Activated CD4-positive, alpha-beta T cell treated with anti-CD3 and anti-CD28 coated beads, Interleukin-2, amount 10 ng/mL, durations not matched to agents 7 days and 5 days (primary cell): ENCODE measurements at regions of chr15 and their contacts with region 1.

Region 1: GRCh38 chr15:64651573-64652260 is 123.7 kb downstream of the RBPMS2 start:
- DNase-seq: peak; percentile 40
- H3K4me3 Mint-ChIP-seq: peak overlapping the region; percentile 4
- H3K27ac Mint-ChIP-seq: peak overlapping the region; percentile 86
- H3K4me1 Mint-ChIP-seq: peaks cover 39% of the 10 kb centered on the region
- H3K27me3 Mint-ChIP-seq: no peaks in the 10 kb centered on the region

Region 2: DNA sequence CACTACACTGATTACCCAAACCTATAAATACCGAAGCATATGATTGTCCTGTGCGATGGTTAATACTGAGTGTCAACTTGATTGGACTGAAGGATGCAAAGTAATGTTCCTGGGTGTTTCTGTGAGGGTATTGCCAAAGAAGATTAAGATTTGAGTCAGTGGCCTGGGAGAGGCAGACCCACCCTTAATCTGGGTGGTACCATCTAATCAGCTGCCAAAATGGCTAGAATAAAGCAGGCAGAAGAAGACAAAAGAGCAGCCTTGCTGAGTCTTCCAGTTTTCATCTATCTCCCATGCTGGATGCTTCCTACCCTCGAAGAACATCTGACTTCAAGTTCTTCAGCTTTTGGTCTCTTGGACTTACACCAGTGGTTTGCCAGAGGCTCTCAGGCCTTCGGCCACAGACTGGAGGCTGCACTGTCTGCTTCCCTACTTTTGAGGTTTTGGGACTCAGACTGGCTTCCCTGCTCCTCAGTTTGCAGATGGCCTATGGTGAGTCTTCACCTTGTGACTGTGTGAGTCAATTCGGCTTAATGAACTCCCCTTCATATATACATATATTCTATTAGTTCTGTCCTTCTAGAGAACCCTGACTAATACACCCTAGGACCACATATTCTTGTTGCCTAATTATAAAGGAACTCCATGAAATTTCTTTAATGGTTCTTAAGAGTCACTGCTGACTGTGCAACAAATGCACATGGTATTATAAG is 327.4 kb before region 1 on chr15:
- CTCF ChIA-PET with region 1: no interaction called
- POLR2A ChIA-PET with region 1: no interaction called
- DNase-seq: no peak
- H3K4me3 Mint-ChIP-seq: no peak overlapping the region
- H3K27ac Mint-ChIP-seq: no peak overlapping the region
- H3K4me1 Mint-ChIP-seq: no peaks in the 10 kb centered on the region
- H3K27me3 Mint-ChIP-seq: no peaks in the 10 kb centered on the region

Region 3: GRCh38 chr15:64513823-64514222 is 137.9 kb before region 1 on chr15:
- CTCF ChIA-PET with region 1: no interaction called
- POLR2A ChIA-PET with region 1: interaction called, 10 read pairs
- DNase-seq: no peak
- H3K4me3 Mint-ChIP-seq: peak overlapping the region; percentile 37
- H3K27ac Mint-ChIP-seq: peak overlapping the region; percentile 85
- H3K4me1 Mint-ChIP-seq: peaks cover 58% of the 10 kb centered on the region
- H3K27me3 Mint-ChIP-seq: no peaks in the 10 kb centered on the region

Region 4: GRCh38 chr15:64634576-64635498 is 16.9 kb before region 1 on chr15:
- CTCF ChIA-PET with region 1: interaction called, 15 read pairs
- POLR2A ChIA-PET with region 1: no interaction called
- DNase-seq: peak; percentile 50
- H3K4me3 Mint-ChIP-seq: peak overlapping the region; percentile 43
- H3K27ac Mint-ChIP-seq: peak overlapping the region; percentile 79
- H3K4me1 Mint-ChIP-seq: peaks cover 59% of the 10 kb centered on the region
- H3K27me3 Mint-ChIP-seq: no peaks in the 10 kb centered on the region